Dendritic cell treated with granulocyte-macrophage colony-stimulating factor and Interleukin-4, amounts not matched to agents 40 ng/mL and 50 ng/mL, for 4 days (primary cell): ENCODE measurements at regions of chr5 and their contacts with region 1.

Region 1: GRCh38 chr5:36414869-36415282 is 113.2 kb upstream of the RANBP3L start:
- H3K4me3 Mint-ChIP-seq: no peak overlapping the region
- H3K27ac Mint-ChIP-seq: no peak overlapping the region
- H3K4me1 Mint-ChIP-seq: peaks cover 12% of the 10 kb centered on the region
- H3K27me3 Mint-ChIP-seq: no peaks in the 10 kb centered on the region

Region 2: DNA sequence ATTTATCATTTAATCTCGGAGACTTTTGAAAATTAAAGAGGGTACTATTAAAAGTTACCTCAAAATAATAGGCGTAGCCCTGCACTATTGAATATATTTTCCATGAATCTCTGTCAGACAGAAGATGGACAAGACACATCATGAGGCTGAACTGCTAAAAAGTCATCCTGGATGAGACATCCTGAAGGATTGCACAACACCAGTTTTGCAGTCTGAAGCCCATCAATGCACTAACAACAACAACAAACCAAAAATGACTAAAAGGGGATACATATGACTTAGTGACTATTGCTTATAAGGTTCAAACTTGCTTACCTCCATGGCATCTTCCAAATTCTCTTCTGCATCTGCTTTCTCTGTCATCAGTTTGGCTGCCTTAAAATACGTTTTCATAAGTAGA is 278.9 kb before region 1 on chr5:
- intact Hi-C with region 1: no loop called
- H3K4me3 Mint-ChIP-seq: no peak overlapping the region
- H3K27ac Mint-ChIP-seq: no peak overlapping the region
- H3K4me1 Mint-ChIP-seq: no peaks in the 10 kb centered on the region
- H3K27me3 Mint-ChIP-seq: no peaks in the 10 kb centered on the region

Region 3: GRCh38 chr5:36168737-36169136 is 246.1 kb before region 1 on chr5:
- intact Hi-C with region 1: no loop called
- H3K4me3 Mint-ChIP-seq: no peak overlapping the region
- H3K27ac Mint-ChIP-seq: no peak overlapping the region
- H3K4me1 Mint-ChIP-seq: peaks cover 6% of the 10 kb centered on the region
- H3K27me3 Mint-ChIP-seq: no peaks in the 10 kb centered on the region

Region 4: GRCh38 chr5:36459176-36460135 is 44.6 kb after region 1 on chr5:
- intact Hi-C with region 1: loop called (anchors 2 kb)
- H3K4me3 Mint-ChIP-seq: no peak overlapping the region
- H3K27ac Mint-ChIP-seq: no peak overlapping the region
- H3K4me1 Mint-ChIP-seq: no peaks in the 10 kb centered on the region
- H3K27me3 Mint-ChIP-seq: no peaks in the 10 kb centered on the region

Region 5: DNA sequence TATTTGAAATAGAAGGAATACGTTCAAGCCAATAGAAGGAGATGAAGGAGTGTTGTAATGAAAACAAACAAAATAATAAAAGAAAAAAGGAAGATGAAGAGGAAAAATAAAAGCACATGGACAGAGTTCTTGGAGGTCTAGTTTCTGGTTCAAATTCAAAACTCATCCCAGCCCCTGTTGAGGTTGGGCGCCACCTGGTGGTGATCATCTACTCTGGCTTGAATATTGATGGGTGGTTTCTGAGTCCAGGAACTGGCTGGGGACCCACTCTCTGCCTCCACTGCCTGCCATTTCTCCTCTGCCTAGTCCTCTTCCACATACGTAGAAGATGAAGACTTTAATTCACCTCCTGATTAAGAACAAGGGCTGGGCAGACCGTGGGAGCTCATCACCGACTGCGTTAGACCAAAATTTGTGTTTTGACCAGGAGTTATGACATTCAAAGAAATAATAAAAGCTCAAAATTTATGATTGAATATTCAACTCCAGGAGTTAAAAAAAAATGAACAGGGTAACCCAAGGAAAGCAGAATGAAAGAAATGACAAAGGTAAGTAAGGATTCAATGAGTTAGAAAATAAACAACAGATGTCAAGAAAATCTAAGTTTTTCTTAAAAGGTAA is 92.6 kb after region 1 on chr5:
- intact Hi-C with region 1: loop called (anchors 1 kb)
- H3K4me3 Mint-ChIP-seq: no peak overlapping the region
- H3K27ac Mint-ChIP-seq: no peak overlapping the region
- H3K4me1 Mint-ChIP-seq: no peaks in the 10 kb centered on the region
- H3K27me3 Mint-ChIP-seq: peaks cover 2% of the 10 kb centered on the region